ENCODE measurements at regions of chr18 and their contacts with region 1.

Region 1: DNA sequence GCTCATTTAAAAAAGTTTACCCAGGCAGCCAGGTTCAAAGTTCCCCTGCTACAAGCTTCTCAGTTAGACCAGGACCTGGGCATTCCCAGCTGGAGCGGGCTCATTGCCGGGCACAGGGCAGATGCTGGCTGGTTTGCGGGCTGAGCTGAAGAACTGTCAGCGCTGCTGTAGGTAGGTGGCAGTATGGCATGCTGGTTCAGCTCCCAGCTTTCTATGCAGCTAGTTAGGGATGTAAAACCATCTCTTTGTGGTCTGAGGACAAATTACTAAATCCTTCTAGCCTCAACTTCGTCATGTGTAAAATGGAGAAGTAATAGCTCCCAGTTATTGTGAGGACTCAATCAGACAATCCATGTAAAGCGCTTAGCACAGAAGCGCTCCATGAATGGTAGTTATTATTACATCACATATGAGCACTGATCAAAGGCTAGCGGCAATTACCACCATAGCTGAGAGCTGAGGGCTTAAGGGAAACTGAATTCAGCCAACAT is 2.4 kb upstream of the LDLRAD4 start:
- DNase-seq: peak; percentile 73
- H3K4me3 ChIP-seq: no peak overlapping the region
- H3K27ac ChIP-seq: no peak overlapping the region
- H3K4me1 ChIP-seq: peaks cover 7% of the 10 kb centered on the region
- H3K27me3 ChIP-seq: peaks cover 62% of the 10 kb centered on the region
- CTCF ChIP-seq: peak; percentile 77

Region 2: GRCh38 chr18:13235981-13236380 is 19.8 kb after region 1 on chr18:
- CTCF ChIA-PET with region 1: no interaction called
- POLR2A ChIA-PET with region 1: no interaction called
- intact Hi-C with region 1: no loop called
- DNase-seq: no peak
- H3K4me3 ChIP-seq: no peak overlapping the region
- H3K27ac ChIP-seq: no peak overlapping the region
- H3K4me1 ChIP-seq: no peaks in the 10 kb centered on the region
- H3K27me3 ChIP-seq: peaks cover 6% of the 10 kb centered on the region
- CTCF ChIP-seq: no peak

Region 3: GRCh38 chr18:13447626-13448334 is 231.6 kb after region 1 on chr18:
- CTCF ChIA-PET with region 1: no interaction called
- POLR2A ChIA-PET with region 1: no interaction called
- intact Hi-C with region 1: loop called (anchors 10 kb)
- DNase-seq: peak; percentile 89
- H3K4me3 ChIP-seq: peak overlapping the region; percentile 13
- H3K27ac ChIP-seq: no peak overlapping the region
- H3K4me1 ChIP-seq: peaks cover 32% of the 10 kb centered on the region
- H3K27me3 ChIP-seq: no peaks in the 10 kb centered on the region
- CTCF ChIP-seq: no peak

Region 4: GRCh38 chr18:13481820-13482617 is 265.9 kb after region 1 on chr18:
- CTCF ChIA-PET with region 1: no interaction called
- POLR2A ChIA-PET with region 1: no interaction called
- intact Hi-C with region 1: no loop called
- DNase-seq: no peak
- H3K4me3 ChIP-seq: no peak overlapping the region
- H3K27ac ChIP-seq: no peak overlapping the region
- H3K4me1 ChIP-seq: no peaks in the 10 kb centered on the region
- H3K27me3 ChIP-seq: no peaks in the 10 kb centered on the region
- CTCF ChIP-seq: no peak

Region 5: DNA sequence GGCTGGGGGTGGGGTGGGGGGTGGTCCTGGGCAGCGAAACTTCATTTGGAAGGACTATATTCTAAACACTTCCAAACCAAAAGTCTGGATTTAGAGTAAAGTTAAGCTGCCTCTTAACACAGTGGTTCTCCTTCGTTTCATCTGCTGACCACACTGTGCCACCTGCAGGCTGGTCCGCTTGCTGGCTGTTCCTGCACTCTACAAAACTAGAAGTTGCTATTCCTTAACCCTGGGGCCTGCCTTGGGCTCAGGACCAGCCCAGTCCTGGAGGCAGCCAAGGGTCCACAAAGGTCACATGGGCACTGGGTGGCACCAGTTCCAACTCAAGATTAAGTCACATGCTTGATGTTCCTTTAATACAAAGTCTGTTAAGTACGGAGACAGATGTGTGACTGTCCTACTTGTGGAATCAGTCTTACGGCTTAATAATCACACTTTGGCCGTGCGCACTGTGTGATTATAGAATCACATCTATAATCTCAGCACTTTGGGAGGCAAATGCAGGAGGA is 314.8 kb after region 1 on chr18:
- CTCF ChIA-PET with region 1: interaction called, 13 read pairs
- POLR2A ChIA-PET with region 1: no interaction called
- intact Hi-C with region 1: loop called (anchors 2 kb)
- DNase-seq: peak; percentile 55
- H3K4me3 ChIP-seq: no peak overlapping the region
- H3K27ac ChIP-seq: no peak overlapping the region
- H3K4me1 ChIP-seq: no peaks in the 10 kb centered on the region
- H3K27me3 ChIP-seq: peaks cover 5% of the 10 kb centered on the region
- CTCF ChIP-seq: peak; percentile 60

Region 6: DNA sequence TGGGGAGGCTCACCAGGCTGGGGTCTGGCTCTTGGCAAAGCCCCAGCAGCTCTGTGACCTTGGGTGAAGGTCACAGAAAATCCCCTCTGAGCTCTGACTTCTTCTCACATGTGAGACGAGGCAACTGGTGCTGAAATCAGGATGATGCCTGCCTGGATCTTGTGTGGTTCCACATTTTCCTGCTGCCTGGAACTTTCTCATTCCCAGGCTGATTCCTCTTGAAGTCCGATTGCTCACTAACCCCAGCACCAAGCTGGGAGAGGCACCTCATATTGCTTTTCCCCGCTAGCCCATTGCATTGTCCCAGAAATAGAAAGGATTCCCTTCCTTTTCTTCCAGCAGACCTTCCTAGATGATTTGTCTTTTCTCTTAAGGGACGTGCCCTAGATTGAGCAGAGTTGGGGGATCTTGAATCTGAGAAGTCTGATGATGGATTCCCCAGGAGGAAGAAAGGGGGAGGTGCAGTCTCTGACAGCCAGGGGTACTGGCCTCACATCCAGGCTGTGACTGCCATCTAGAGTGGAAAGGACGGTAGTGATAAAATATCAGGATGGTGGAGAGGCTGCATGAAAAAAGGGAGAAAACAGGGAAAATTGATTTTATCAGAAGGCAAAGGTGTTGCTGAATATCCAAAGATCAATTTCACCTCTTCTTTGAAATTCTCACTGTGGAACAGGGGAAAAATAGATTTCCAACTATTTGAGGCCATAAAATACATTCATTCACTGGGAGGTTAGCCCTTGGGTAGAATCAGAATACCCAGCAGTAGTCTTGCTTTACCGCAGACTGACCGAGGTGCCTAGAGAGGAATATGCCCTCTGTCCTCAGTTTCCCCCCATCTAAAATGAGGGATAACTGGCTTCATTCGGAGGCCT is 413.9 kb after region 1 on chr18:
- CTCF ChIA-PET with region 1: no interaction called
- POLR2A ChIA-PET with region 1: interaction called, 4 read pairs
- intact Hi-C with region 1: loop called (anchors 2 kb)
- DNase-seq: peak; percentile 80
- H3K4me3 ChIP-seq: no peak overlapping the region
- H3K27ac ChIP-seq: no peak overlapping the region
- H3K4me1 ChIP-seq: no peaks in the 10 kb centered on the region
- H3K27me3 ChIP-seq: no peaks in the 10 kb centered on the region
- CTCF ChIP-seq: peak; percentile 78